ENCODE measurements at regions of chr19 and their contacts with region 1.

Region 1: GRCh38 chr19:47152224-47153017 is 21.8 kb downstream of the SAE1 start:
- DNase-seq: no peak
- ATAC-seq: no peak
- H3K4me3 ChIP-seq: no peak overlapping the region
- H3K27ac ChIP-seq: no peak overlapping the region
- H3K4me1 ChIP-seq: peaks cover 6 to 41% (median 24%) of the 10 kb centered on the region in 9 donors
- H3K27me3 ChIP-seq: no peaks in the 10 kb centered on the region
- CTCF ChIP-seq: no peak

Region 2: GRCh38 chr19:47176627-47177090 is 24.2 kb after region 1 on chr19:
- intact Hi-C with region 1: no loop called
- DNase-seq: peak in 1 of 2 donors; percentile 16
- ATAC-seq: peak; percentile 50 to 80 (median 64)
- H3K4me3 ChIP-seq: no peak overlapping the region
- H3K27ac ChIP-seq: peak overlapping the region in 9 of 10 donors; percentile 24 to 65 (median 60)
- H3K4me1 ChIP-seq: peaks cover 13 to 35% (median 23%) of the 10 kb centered on the region in 9 donors
- H3K27me3 ChIP-seq: no peaks in the 10 kb centered on the region
- CTCF ChIP-seq: no peak

Region 3: GRCh38 chr19:47210689-47211316 is 58.4 kb after region 1 on chr19:
- intact Hi-C with region 1: loop called in 6 of 10 experiments (anchors 2 to 5 kb)
- DNase-seq: peak; percentile 35 to 88
- ATAC-seq: peak; percentile 38 to 77 (median 74)
- H3K4me3 ChIP-seq: no peak overlapping the region
- H3K27ac ChIP-seq: peak overlapping the region in 6 of 10 donors; percentile 32 to 73 (median 56)
- H3K4me1 ChIP-seq: peaks cover 4 to 25% (median 13%) of the 10 kb centered on the region in 9 donors
- H3K27me3 ChIP-seq: no peaks in the 10 kb centered on the region
- CTCF ChIP-seq: peak; percentile 71 to 91 (median 85)

Region 4: GRCh38 chr19:47348819-47349795 is 196.7 kb after region 1 on chr19 and contains the start of gene DHX34:
- intact Hi-C with region 1: no loop called
- DNase-seq: peak; percentile 98 to 99
- ATAC-seq: peak; percentile 100
- H3K4me3 ChIP-seq: peak within 1 kb of the TSS; percentile 50 to 96 (median 88)
- H3K27ac ChIP-seq: peak within 1 kb of the TSS in 9 of 10 donors; percentile 5 to 93 (median 78)
- H3K4me1 ChIP-seq: peaks cover 0 to 40% (median 17%) of the 10 kb centered on the region in 9 donors
- H3K27me3 ChIP-seq: no peaks in the 10 kb centered on the region
- CTCF ChIP-seq: peak; percentile 96 to 100 (median 100)
- total RNA-seq, gene DHX34: 4.4 to 8.8 (median 5.5) TPM